ENCODE measurements at regions of chr5 and their contacts with region 1.

Region 1: DNA sequence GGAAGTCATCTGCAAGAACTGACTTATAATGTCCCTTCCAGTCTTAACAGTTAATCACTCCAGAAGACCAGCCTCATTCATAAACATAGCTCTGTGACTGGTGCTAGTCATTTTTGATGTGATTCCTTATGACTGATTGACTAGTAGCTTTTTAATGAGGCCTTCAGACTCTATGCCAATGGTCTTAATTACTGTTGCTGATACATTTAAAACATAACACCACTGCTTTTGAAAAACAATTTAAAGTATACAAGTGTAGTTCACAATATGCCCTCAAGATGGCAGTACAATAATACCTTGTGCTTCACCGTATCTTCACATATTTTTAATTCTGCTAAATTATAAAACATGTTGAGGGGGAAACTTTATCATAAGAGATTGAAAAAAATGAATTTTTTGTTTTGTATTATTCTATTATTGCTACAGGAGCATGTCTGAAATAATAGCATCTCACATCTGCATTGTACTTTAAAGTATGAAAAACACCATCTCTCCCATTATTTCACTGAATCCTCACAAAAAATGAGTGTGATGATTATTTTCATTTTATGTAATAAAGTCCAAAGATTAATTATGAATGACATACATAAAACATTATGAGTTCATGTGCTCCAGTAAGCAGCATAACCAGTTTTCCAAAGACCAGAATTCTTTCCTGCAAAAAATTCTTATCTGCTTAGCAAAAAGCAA is 55.2 kb upstream of the SHISAL2B start:
- DNase-seq: no peak
- H3K4me3 ChIP-seq: no peak overlapping the region
- H3K27ac ChIP-seq: no peak overlapping the region
- H3K4me1 ChIP-seq: no peaks in the 10 kb centered on the region
- H3K27me3 ChIP-seq: peaks cover 0 to 9% (median 0%) of the 10 kb centered on the region in 4 donors
- CTCF ChIP-seq: peak; percentile 49 to 87 (median 74)
- POLR2A ChIP-seq: no peak

Region 2: DNA sequence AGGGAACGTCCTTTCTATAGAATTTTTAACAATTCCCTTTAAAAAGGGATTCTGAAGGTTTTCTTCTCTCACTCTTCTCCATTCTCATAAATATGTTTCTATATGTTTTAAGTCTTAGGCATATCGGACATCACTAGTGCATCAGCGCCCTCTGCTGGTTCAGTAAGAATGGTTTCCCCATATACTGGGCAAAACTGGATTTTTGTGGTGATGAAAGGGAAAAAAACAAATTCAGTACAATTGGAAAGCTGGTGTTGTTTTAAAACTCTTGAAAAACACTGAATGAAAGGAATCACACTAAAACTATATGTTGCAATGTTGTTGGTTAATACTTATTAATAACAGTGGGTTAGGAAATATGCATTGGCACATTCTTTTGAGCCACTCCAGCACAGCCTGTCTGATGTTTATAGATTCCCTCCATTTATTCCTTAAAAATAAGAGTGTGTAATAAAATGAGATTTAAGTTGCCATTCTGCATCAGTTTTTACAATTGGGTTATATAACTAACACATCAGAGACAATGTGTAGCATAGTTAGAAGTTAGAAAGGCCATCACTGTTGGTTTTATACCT is 149.4 kb after region 1 on chr5:
- intact Hi-C with region 1: loop called (anchors 5 kb)
- DNase-seq: peak; percentile 13
- H3K4me3 ChIP-seq: no peak overlapping the region
- H3K27ac ChIP-seq: no peak overlapping the region
- H3K4me1 ChIP-seq: no peaks in the 10 kb centered on the region
- H3K27me3 ChIP-seq: no peaks in the 10 kb centered on the region
- CTCF ChIP-seq: peak; percentile 42 to 84 (median 79)
- POLR2A ChIP-seq: no peak

Measured in esophagus squamous epithelium (tissue), 5 donors.